ENCODE measurements at regions of chr16 and their contacts with region 1.

Region 1: GRCh38 chr16:66552286-66553177 is at the start of gene CKLF:
- DNase-seq: peak; percentile 82
- H3K4me3 ChIP-seq: peak within 1 kb of the TSS; percentile 43
- H3K27ac ChIP-seq: peak within 1 kb of the TSS; percentile 84 to 89
- H3K4me1 ChIP-seq: no peaks in the 10 kb centered on the region
- H3K27me3 ChIP-seq: no peaks in the 10 kb centered on the region
- CTCF ChIP-seq: peak in 2 of 4 experiments; percentile 4 to 30
- POLR2A ChIP-seq: peak; percentile 82
- total RNA-seq, gene CKLF: 20.5 to 28.3 TPM

Region 2: DNA sequence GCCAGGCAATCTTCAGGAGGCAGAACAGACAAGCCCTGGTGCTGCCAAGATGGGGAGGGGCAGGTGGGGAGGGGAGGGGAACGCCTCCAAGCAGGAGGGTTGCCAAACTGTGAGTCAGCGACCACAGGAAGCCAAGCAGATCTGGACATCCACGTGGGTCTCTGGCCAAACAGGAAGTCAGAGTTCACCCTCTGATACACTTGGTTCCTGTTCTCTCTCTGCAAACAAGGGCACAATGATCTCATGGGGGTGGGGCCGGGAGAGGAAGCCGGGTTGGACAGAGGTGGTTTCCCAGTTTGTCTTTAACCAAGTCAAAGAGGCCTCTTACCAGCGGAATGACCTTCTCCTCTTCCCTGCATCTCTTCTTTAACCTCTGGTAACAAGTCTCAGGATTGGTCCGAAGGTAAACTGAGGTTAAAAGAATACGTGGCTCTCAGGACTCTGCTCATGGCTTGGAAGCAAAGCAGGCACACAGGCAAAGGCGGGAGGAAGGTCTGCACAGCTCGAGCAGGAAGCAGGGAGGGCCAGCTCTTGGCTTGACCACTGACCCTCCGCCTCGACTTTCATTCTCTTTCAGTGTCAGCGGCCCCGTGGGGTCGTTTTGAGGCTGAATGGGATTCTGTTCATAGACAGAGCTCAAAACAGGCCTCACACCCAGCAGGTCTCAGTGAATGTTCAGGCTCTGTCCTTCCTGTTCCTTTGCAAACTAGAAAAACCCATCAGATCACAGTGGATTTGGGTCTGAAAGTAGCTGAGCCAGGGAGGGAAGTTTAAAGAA is 35.5 kb before region 1 on chr16:
- intact Hi-C with region 1: loop called (anchors 5 kb)
- DNase-seq: peak; percentile 97
- H3K4me3 ChIP-seq: no peak overlapping the region
- H3K27ac ChIP-seq: peak overlapping the region; percentile 96
- H3K4me1 ChIP-seq: peaks cover 24% of the 10 kb centered on the region
- H3K27me3 ChIP-seq: no peaks in the 10 kb centered on the region
- CTCF ChIP-seq: no peak
- POLR2A ChIP-seq: peak; percentile 32

Region 3: GRCh38 chr16:66814734-66815133 is 262.2 kb after region 1 on chr16:
- intact Hi-C with region 1: no loop called
- DNase-seq: no peak
- H3K4me3 ChIP-seq: no peak overlapping the region
- H3K27ac ChIP-seq: no peak overlapping the region
- H3K4me1 ChIP-seq: no peaks in the 10 kb centered on the region
- H3K27me3 ChIP-seq: no peaks in the 10 kb centered on the region
- CTCF ChIP-seq: no peak
- POLR2A ChIP-seq: no peak

Measured in prostate gland (tissue), 2 donors.